A673 (cell line): ENCODE measurements at regions of chr4 and their contacts with region 1.

Region 1: GRCh38 chr4:110196206-110196870 is 2.1 kb downstream of the ELOVL6 start:
- DNase-seq: peak; percentile 61
- H3K4me3 ChIP-seq: peak overlapping the region; percentile 87
- H3K27ac ChIP-seq: peak overlapping the region; percentile 97
- H3K4me1 ChIP-seq: peaks cover 35% of the 10 kb centered on the region
- H3K27me3 ChIP-seq: no peaks in the 10 kb centered on the region
- CTCF ChIP-seq: no peak

Region 2: DNA sequence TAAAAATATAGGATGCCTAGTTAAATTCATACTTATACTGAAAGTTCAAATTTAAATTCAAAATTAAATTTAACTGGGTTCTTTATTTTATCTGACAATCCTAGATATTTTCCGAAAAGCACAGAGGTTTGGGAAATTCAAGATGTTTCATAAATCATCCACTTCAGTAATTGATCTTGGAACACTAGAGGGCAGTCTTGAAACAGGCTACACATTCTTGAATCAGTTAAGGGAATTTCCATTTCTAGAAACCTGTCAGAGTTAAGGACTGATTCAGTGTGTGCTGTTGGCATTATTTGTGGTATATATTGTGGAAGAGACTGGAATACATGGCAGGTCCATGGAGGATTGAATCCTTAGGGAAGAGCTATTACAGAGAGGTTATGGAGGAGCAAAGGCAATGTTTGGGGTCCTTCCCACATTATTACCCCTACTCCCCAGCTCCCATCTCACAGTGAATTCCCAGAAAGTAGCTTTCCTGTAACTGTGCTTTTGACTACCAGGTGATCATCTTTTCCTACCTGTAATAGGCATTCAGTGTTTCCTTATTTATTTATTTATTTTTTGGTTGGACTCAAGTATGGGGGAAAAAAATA is 190.8 kb before region 1 on chr4:
- CTCF ChIA-PET with region 1: no interaction called
- POLR2A ChIA-PET with region 1: no interaction called
- intact Hi-C with region 1: loop called (anchors 5 kb)
- DNase-seq: peak; percentile 84
- H3K4me3 ChIP-seq: no peak overlapping the region
- H3K27ac ChIP-seq: no peak overlapping the region
- H3K4me1 ChIP-seq: peaks cover 3% of the 10 kb centered on the region
- H3K27me3 ChIP-seq: no peaks in the 10 kb centered on the region
- CTCF ChIP-seq: peak; percentile 85

Region 3: GRCh38 chr4:110049951-110050925 is 146.1 kb before region 1 on chr4:
- CTCF ChIA-PET with region 1: no interaction called
- POLR2A ChIA-PET with region 1: no interaction called
- intact Hi-C with region 1: loop called (anchors 5 kb)
- DNase-seq: peak; percentile 59
- H3K4me3 ChIP-seq: no peak overlapping the region
- H3K27ac ChIP-seq: no peak overlapping the region
- H3K4me1 ChIP-seq: peaks cover 12% of the 10 kb centered on the region
- H3K27me3 ChIP-seq: no peaks in the 10 kb centered on the region
- CTCF ChIP-seq: peak; percentile 91

Region 4: DNA sequence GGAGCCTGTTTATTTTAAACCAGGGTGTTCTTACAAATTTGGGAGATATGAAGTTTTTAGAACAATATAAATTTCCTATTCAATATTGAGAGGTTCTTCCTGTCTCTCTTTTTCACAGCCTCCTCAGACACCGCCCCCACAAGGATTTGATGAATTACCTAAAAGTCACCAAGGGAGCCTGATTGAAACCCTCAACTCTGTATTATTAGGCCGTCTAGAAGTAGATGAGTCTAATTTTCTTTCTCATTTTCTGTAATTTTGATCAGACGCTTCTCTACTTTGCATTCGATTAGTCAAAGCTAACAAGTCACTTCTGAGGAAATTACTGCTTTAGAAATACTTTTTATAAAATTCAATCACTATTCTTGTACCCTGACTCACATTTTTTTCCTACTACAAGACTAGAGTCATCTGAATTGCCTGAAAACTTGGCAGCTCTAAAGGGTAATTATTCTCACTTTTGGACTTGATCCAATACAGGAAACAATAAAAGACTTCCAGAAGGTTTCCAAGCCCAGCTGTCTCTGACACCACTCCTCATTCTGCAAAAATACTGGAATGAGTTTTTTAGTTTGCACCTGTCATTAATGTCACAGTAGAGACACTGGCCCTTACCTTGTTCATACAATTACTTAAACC is 109.1 kb before region 1 on chr4:
- CTCF ChIA-PET with region 1: no interaction called
- POLR2A ChIA-PET with region 1: no interaction called
- intact Hi-C with region 1: loop called (anchors 5 kb)
- DNase-seq: peak; percentile 94
- H3K4me3 ChIP-seq: peak overlapping the region; percentile 3
- H3K27ac ChIP-seq: peak overlapping the region; percentile 63
- H3K4me1 ChIP-seq: peaks cover 72% of the 10 kb centered on the region
- H3K27me3 ChIP-seq: no peaks in the 10 kb centered on the region
- CTCF ChIP-seq: no peak

Region 5: GRCh38 chr4:110142461-110142860 is 53.9 kb before region 1 on chr4:
- CTCF ChIA-PET with region 1: no interaction called
- POLR2A ChIA-PET with region 1: no interaction called
- intact Hi-C with region 1: no loop called
- DNase-seq: no peak
- H3K4me3 ChIP-seq: no peak overlapping the region
- H3K27ac ChIP-seq: no peak overlapping the region
- H3K4me1 ChIP-seq: no peaks in the 10 kb centered on the region
- H3K27me3 ChIP-seq: no peaks in the 10 kb centered on the region
- CTCF ChIP-seq: no peak

Region 6: DNA sequence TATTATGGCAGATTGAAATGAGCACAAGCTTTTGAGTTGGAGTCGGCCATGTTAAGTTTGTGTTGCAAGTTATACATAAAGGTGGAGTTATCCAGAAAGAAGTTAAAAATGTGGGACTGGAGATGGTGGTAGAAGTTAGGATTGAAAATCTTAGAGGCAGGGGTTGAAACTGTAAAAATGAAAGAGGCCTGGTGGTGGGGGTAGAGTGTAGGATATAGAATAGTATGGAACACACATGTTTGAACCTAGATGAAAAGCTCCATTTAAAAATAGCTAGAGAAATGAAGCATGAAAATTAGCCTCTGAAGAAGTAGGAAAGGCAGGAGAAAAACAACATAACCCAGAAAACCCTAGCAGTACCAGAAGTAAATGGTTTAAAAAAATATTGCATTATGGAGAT is 147.8 kb after region 1 on chr4:
- CTCF ChIA-PET with region 1: no interaction called
- POLR2A ChIA-PET with region 1: no interaction called
- intact Hi-C with region 1: loop called (anchors 5 kb)
- DNase-seq: peak; percentile 71
- H3K4me3 ChIP-seq: no peak overlapping the region
- H3K27ac ChIP-seq: no peak overlapping the region
- H3K4me1 ChIP-seq: peaks cover 53% of the 10 kb centered on the region
- H3K27me3 ChIP-seq: no peaks in the 10 kb centered on the region
- CTCF ChIP-seq: peak; percentile 67

Region 7: DNA sequence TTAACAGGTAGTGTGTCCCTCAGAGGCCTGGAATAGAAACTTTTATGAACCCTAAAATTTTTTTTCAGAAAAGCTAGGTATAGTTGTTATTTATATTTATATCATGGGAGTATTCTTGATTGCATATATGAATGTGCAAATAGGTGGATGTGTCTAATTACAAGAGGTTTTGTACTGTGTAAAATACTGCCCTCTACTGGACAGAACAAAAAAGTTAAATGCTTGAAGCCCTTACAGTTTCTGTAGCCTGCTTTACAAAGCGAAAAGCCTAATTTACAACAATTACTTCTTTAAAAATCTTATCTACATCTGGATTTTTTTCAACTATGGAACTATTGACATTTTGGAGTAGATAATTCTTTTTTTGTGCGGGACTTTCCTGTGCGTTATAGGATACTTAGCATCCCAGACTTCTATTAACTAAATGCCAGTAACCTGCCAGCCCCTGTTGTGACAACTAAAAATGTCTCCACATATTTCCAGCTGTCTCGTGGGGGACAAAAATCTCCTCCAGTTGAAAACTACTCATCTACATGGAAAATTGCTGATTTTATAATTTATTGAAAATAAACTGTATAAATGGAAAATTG is 314.7 kb after region 1 on chr4:
- CTCF ChIA-PET with region 1: no interaction called
- POLR2A ChIA-PET with region 1: no interaction called
- intact Hi-C with region 1: loop called (anchors 2 kb)
- DNase-seq: peak; percentile 85
- H3K4me3 ChIP-seq: no peak overlapping the region
- H3K27ac ChIP-seq: no peak overlapping the region
- H3K4me1 ChIP-seq: peaks cover 25% of the 10 kb centered on the region
- H3K27me3 ChIP-seq: no peaks in the 10 kb centered on the region
- CTCF ChIP-seq: peak; percentile 75